ENCODE measurements at regions of chr2 and their contacts with region 1.

Region 1: GRCh38 chr2:196239622-196240587 is 68.5 kb upstream of the STK17B start:
- DNase-seq: peak; percentile 55 to 94 (median 81)
- ATAC-seq: peak; percentile 72
- H3K4me3 ChIP-seq: peak overlapping the region; percentile 7 to 21
- H3K4me3 Mint-ChIP-seq: peak overlapping the region; percentile 72
- H3K27ac ChIP-seq: peak overlapping the region; percentile 33 to 73
- H3K27ac Mint-ChIP-seq: peak overlapping the region; percentile 92
- H3K4me1 ChIP-seq: peaks cover 66% of the 10 kb centered on the region
- H3K4me1 Mint-ChIP-seq: peaks cover 74% of the 10 kb centered on the region
- H3K27me3 ChIP-seq: no peaks in the 10 kb centered on the region
- H3K27me3 Mint-ChIP-seq: no peaks in the 10 kb centered on the region
- CTCF ChIP-seq: peak; percentile 35

Region 2: DNA sequence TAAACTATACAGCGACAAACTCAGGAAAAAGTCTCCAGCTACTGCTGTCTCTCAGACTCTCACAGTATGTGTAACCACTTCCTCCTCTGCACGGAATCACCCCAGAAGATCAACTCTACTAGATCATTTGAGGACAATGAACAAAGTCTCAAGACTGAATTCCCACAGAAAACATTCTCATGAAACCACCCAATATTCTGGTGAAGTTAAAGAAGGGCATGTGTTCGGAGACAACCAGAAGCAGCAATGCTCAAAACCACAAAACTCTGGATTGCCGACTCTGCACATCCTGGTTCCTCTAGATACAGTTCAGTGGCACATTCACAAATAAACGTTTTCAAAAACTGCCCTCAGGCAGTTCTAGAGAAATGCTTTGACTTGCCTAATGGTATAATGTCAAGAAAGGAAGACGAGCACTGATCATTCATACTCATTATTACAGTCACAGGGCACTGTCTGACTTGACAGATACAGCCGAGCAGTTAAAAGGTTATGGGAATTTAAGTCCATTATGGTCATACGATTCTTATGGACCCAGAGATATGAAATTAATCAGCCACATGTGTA is 23.4 kb after region 1 on chr2:
- CTCF ChIA-PET with region 1: interaction called, 8 read pairs
- POLR2A ChIA-PET with region 1: interaction called, 10 read pairs
- intact Hi-C with region 1: loop called (anchors 2 kb)
- DNase-seq: peak in 6 of 9 experiments; percentile 39 to 87 (median 58)
- ATAC-seq: peak; percentile 82
- H3K4me3 ChIP-seq: peak overlapping the region; percentile 3 to 12
- H3K4me3 Mint-ChIP-seq: peak overlapping the region; percentile 72
- H3K27ac ChIP-seq: peak overlapping the region; percentile 27 to 61
- H3K27ac Mint-ChIP-seq: peak overlapping the region; percentile 93
- H3K4me1 ChIP-seq: peaks cover 72% of the 10 kb centered on the region
- H3K4me1 Mint-ChIP-seq: peaks cover 78% of the 10 kb centered on the region
- H3K27me3 ChIP-seq: no peaks in the 10 kb centered on the region
- H3K27me3 Mint-ChIP-seq: no peaks in the 10 kb centered on the region
- CTCF ChIP-seq: no peak

Region 3: GRCh38 chr2:196268538-196269338 is 28.8 kb after region 1 on chr2:
- CTCF ChIA-PET with region 1: interaction called, 4 read pairs
- POLR2A ChIA-PET with region 1: interaction called, 10 read pairs
- intact Hi-C with region 1: loop called in 1 of 2 experiments (anchors 2 kb)
- DNase-seq: peak in 1 of 9 experiments; percentile 49
- ATAC-seq: peak; percentile 39
- H3K4me3 ChIP-seq: peak overlapping the region in 1 of 2 experiments; percentile 21
- H3K4me3 Mint-ChIP-seq: peak overlapping the region; percentile 59
- H3K27ac ChIP-seq: peak overlapping the region in 1 of 2 experiments; percentile 41
- H3K27ac Mint-ChIP-seq: peak overlapping the region; percentile 84
- H3K4me1 ChIP-seq: peaks cover 48% of the 10 kb centered on the region
- H3K4me1 Mint-ChIP-seq: peaks cover 56% of the 10 kb centered on the region
- H3K27me3 ChIP-seq: no peaks in the 10 kb centered on the region
- H3K27me3 Mint-ChIP-seq: no peaks in the 10 kb centered on the region
- CTCF ChIP-seq: no peak